Activated naive CD4-positive, alpha-beta T cell treated with anti-CD3 and anti-CD28 coated beads for 36 hours (primary cell): ENCODE measurements at regions of chr1 and their contacts with region 1.

Region 1: DNA sequence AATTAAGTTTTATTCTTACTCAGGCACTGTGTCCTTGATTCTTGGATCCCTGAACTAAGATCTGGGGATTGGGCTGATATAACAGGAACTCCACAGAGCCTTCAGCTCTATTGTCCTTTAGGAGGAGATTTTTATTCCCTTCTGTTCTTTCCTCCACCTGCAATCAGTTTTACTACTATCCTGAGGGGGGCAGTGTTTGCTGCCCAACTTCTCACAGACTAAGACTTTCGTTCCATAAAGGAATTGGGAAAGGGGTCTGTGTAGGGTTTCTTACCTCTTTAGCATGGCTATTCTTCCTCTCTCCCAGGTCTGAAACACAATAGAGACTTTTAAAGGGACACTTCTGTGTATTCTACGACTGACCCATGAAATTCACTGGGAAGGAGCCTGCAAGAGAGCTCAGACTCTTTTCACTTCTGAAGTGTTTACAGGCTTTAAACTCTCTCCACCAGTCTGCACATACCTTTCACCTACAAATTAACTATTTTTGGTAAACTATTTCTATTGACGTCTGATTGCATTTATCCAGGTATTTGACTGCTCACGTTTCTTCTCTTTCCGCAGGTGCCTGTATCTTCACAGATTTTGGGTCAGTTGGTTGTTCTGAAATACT is 103.3 kb upstream of the DEPDC1 start:
- DNase-seq: no peak
- H3K4me3 Mint-ChIP-seq: no peak overlapping the region
- H3K27ac Mint-ChIP-seq: no peak overlapping the region
- H3K4me1 Mint-ChIP-seq: no peaks in the 10 kb centered on the region
- H3K27me3 Mint-ChIP-seq: no peaks in the 10 kb centered on the region

Region 2: GRCh38 chr1:68372487-68372886 is 227.7 kb before region 1 on chr1:
- CTCF ChIA-PET with region 1: no interaction called
- intact Hi-C with region 1: no loop called
- DNase-seq: no peak
- H3K4me3 Mint-ChIP-seq: no peak overlapping the region
- H3K27ac Mint-ChIP-seq: no peak overlapping the region
- H3K4me1 Mint-ChIP-seq: no peaks in the 10 kb centered on the region
- H3K27me3 Mint-ChIP-seq: no peaks in the 10 kb centered on the region

Region 3: GRCh38 chr1:69737527-69738185 is 1137.5 kb after region 1 on chr1:
- CTCF ChIA-PET with region 1: no interaction called
- intact Hi-C with region 1: loop called (anchors 2 kb)
- DNase-seq: peak; percentile 12
- H3K4me3 Mint-ChIP-seq: no peak overlapping the region
- H3K27ac Mint-ChIP-seq: no peak overlapping the region
- H3K4me1 Mint-ChIP-seq: no peaks in the 10 kb centered on the region
- H3K27me3 Mint-ChIP-seq: peaks cover 3% of the 10 kb centered on the region